Head of caudate nucleus (tissue), 42 donors: ENCODE measurements at regions of chr6 and their contacts with region 1.

Region 1: DNA sequence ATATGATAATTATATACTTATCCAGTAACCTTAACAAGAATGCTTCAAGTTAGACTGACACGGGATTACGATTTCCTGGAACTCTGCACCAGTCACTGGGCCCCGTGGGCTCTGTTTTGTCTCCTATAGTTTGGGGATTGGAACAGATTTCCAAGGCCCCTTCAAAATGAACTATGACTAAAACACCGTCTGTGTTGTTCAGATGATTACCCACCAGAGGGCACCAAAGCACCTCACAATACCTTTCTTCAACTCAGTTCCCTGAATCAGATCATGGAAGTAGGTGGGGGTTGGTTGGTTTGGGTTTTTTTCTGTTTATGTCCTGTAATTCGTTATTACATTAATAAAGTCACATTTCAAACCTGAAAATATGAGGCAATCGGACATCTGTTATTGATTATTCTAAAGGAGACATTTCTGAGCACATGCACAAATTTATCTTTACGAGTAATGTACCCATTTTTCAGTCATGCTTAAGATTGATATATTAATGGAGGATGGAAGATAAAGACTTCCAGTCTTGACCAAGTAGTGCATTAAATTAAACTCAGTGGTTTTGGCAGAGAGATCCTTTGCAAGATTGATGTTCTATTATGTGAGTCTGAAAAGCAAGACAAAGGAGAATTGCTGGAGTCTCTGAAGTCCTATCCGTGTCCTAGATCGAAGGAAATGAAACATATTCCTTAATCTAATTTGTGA is 112.0 kb upstream of the COL21A1 start:
- DNase-seq: peak in 40 of 42 donors; percentile 19 to 91 (median 75)

Region 2: GRCh38 chr6:56101141-56101553 is 258.2 kb before region 1 on chr6:
- intact Hi-C with region 1: no loop called
- DNase-seq: no peak

Region 3: GRCh38 chr6:56374841-56375369 is 15.6 kb after region 1 on chr6:
- intact Hi-C with region 1: no loop called
- DNase-seq: no peak

Region 4: GRCh38 chr6:56595490-56596122 is 236.3 kb after region 1 on chr6:
- intact Hi-C with region 1: loop called (anchors 5 kb)
- DNase-seq: peak in 37 of 42 donors; percentile 19 to 83 (median 54)